PC-3 (cell line): ENCODE measurements at regions of chr11 and their contacts with region 1.

Region 1: DNA sequence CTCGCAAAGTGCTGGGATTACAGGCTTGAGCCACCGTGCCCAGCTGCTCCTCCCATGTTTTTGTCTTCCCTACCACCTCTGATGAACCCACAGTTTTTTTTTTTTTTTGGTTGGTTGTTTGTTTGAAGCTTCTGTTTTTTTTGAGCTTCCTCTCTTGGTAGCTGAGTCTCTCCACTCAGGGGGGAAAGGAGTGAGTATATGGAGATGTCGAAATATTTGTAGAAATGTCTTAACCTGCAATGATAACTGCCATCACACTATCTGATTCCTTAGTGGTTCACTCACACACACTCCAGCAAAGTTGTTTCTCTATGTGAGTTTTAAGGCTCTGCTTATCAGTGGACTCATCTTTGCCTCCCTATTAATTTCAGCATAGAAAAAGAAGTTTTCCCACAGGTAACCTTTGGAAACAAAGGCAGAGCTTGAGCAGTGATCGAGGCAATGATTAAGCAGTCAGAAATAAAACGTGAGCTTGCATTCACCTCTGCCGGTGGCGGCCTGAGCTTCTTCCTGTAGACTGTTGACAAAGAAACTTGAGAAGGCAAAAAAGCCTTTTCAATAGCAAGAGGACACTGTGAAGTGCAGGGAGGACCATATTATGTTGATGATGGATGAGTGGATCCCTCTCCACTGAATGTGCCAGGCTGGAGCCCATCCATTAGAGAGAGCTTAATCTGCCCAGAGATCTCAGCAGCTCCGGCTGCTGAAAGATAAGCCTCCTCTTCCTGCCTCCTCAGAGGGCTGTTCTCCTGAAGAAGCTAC is 29.0 kb upstream of the RASSF10 start:
- DNase-seq: peak; percentile 24
- ATAC-seq: peak; percentile 65
- H3K4me3 ChIP-seq: no peak overlapping the region
- H3K27ac ChIP-seq: no peak overlapping the region
- H3K4me1 ChIP-seq: peaks cover 5% of the 10 kb centered on the region; the same call in 1 of the 2 replicates
- H3K27me3 ChIP-seq: no peaks in the 10 kb centered on the region
- CTCF ChIP-seq: no peak

Region 2: DNA sequence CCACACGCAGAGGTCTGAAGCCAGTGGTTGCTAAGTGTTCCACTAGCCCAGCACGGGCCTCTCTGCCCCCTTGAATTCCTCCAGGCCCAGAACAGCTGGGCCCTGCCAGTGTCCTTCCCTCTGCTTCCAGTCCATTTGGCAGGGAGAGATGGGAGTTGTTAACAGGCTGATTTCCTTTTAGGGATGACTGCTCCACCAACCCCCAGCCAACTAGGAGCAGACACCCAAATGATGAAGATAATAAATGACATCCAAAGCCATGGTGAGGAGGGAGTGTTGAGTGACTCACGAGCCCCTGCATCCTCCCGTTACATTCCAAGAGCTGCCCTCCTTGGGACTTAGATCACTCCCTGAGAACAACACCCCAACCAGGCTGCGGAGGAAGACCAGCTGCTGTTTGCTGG is 582.2 kb before region 1 on chr11:
- CTCF ChIA-PET with region 1: no interaction called
- POLR2A ChIA-PET with region 1: interaction called, 23 read pairs
- intact Hi-C with region 1: no loop called
- DNase-seq: peak; percentile 28
- ATAC-seq: peak; percentile 33; the same call in 1 of the 2 replicates
- H3K4me3 ChIP-seq: no peak overlapping the region
- H3K27ac ChIP-seq: no peak overlapping the region
- H3K4me1 ChIP-seq: peaks cover 3% of the 10 kb centered on the region
- H3K27me3 ChIP-seq: no peaks in the 10 kb centered on the region
- CTCF ChIP-seq: no peak

Region 3: GRCh38 chr11:12922980-12923507 is 57.1 kb before region 1 on chr11:
- CTCF ChIA-PET with region 1: no interaction called
- POLR2A ChIA-PET with region 1: no interaction called
- intact Hi-C with region 1: no loop called
- DNase-seq: no peak
- ATAC-seq: no peak
- H3K4me3 ChIP-seq: no peak overlapping the region
- H3K27ac ChIP-seq: no peak overlapping the region
- H3K4me1 ChIP-seq: no peaks in the 10 kb centered on the region
- H3K27me3 ChIP-seq: no peaks in the 10 kb centered on the region
- CTCF ChIP-seq: no peak

Region 4: DNA sequence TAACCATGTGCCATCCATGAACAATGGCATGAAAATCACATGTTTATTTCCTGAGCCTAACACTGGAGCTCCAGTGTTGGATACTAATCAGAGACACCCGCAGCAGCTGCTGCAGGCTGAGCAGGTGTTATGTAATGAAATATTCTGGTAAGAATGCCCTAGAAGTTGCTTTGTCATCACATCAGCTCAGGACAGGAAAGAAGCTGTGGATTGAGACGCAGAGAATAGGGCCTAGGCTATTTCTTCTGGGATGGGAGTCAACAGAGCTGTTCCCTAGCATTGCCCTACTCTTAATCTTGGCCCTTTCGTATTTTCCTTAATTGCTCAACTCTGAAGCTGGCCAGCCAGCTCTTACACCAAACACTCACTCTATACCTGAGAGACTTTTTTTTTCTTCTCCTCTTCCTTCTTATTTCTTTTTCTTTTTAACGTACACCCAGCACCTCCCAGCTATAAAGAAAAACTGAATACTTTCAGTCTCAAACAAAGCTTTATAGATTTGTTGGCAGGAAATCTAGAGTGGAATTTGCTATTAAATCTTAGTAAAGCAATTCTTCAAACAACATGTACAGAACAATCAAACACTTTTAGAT is 61.0 kb after region 1 on chr11:
- CTCF ChIA-PET with region 1: no interaction called
- POLR2A ChIA-PET with region 1: no interaction called
- intact Hi-C with region 1: no loop called
- DNase-seq: no peak
- ATAC-seq: peak; percentile 42
- H3K4me3 ChIP-seq: no peak overlapping the region
- H3K27ac ChIP-seq: no peak overlapping the region
- H3K4me1 ChIP-seq: no peaks in the 10 kb centered on the region
- H3K27me3 ChIP-seq: no peaks in the 10 kb centered on the region
- CTCF ChIP-seq: no peak